SK-MEL-5 (cell line): ENCODE measurements at regions of chr14 and their contacts with region 1.

Region 1: GRCh38 chr14:24984846-24985589 is 64.9 kb downstream of the STXBP6 start:
- DNase-seq: no peak

Region 2: DNA sequence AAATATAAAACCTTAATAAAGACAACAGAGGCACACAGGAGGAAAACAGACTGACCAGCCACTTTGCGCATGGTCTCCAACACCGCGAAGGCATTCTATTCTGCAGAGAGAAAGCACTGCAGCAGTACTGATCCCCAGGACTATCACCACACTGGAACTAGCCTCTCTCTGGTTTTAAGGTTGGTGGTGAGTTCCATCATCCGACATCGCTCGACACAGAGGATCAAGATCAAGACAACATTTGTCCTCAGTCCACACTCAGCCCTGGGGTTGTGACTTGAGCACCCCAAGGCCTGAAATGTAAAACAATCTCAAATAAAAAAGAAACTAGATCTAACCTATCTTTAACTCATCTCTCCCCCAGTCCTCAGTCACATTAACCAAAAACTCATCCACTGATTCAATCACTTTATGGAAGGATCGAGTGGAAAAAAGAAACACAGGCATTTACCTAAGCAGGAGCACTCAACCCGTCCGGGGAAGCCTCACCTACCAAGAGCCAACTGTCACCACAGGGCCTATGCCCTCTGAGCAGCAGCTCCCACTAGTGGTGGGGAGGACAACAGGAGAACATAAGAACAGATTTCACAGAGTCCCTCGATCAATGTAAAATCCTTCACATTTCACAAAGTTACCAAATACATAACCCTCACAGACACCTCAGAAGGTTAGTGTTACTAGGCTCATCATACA is 47.2 kb after region 1 on chr14:
- in situ Hi-C with region 1: loop called (anchors 10 kb)
- DNase-seq: peak; percentile 56

Region 3: GRCh38 chr14:26730929-26731618 is 1746.1 kb after region 1 on chr14:
- in situ Hi-C with region 1: no loop called
- DNase-seq: peak; percentile 64